ENCODE measurements at regions of chr18 and their contacts with region 1.

Region 1: DNA sequence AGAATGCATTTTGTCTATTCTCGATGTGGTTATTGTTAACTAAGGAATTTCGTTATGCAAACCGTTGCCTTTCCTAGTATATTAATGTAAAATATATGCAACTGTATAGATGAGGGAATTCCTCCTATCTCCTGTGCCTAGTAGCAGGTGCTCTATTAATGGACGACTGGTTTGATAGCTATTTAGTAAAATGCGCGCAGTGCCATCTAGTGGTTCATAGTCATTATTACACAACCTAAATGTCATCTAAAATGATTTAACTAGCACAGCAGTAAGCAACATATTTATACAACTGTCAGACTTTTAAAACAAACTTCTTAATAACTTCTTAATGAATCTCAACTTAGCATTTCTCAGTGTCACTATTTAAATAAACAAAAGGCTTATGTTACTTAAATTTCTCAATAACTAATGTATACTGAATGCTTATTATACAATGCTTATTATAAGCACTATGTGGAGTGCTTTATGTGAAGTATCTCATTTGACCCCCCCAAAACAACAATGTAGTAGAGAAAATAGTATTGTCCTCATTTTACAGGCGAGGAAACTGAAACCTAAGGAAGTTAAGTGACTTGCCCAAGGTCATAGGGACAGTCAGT is 77.9 kb downstream of the DTNA start:
- DNase-seq: no peak
- ATAC-seq: peak; percentile 76

Region 2: DNA sequence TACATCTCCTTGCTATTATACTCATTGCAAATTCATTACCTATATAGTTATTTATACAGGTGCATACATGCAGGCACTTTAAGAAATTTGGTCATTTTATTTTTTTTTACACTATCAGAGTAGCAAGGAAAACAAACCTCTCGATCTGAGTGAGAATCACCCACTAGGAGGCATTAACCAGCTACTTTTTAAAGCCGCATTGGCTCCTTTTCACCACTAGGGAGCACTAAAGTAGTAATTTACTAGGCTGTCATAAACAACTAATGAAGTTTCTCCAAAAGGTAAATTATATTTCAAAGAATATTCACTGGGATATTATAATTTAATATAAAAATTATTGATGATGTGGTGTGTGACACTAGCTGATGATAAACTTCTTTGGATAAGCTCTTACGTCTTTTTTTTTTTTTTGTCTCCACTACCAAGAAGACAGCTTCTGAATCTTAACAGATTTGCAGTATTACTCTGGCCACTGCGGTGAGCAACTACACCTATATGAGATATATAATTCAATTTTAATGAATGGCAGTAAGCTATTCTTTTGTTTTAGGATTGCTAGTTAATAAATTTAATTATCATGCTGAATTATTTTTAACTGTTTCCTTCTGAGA is 665.2 kb before region 1 on chr18:
- intact Hi-C with region 1: loop called (anchors 10 kb)
- DNase-seq: no peak
- ATAC-seq: peak; percentile 36

Region 3: DNA sequence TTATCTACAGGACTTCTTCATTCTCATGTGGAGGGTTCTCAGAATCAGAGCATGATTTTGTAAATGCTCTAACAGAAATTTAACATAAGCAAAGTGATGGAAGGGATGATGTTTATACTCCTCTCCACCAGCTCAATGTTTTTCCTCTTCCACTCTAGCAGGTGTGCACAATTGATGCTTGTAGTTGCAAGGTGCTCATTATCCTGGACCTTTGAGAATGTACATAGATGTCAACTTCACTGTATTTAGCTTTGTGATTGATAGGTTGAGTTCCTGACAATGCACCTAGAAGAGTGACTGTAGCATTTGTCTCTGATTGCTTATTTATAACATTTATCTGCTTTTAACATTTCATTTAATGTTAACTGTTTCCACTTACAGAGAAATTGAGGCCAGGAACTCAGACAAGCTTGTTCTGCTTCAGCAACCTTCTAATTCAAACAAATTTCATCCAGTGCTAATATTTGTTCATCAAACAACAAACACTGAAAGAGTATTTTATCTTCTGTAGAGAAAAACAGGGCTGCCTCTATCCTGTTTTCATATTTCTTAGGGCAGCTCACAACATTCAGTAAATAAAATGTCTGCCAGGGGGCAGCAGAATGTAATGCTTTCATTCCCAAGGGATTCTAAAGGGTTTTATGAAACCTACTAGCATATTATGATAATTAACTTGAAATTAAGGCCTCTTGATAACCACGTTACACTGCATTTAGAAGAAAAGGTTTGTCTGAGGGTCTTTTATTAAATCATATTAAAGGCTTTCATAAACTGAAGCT is 435.5 kb before region 1 on chr18:
- intact Hi-C with region 1: loop called (anchors 10 kb)
- DNase-seq: no peak
- ATAC-seq: no peak

Region 4: GRCh38 chr18:34483198-34483597 is 304.8 kb before region 1 on chr18:
- intact Hi-C with region 1: loop called (anchors 10 kb)
- DNase-seq: no peak
- ATAC-seq: no peak

Region 5: GRCh38 chr18:34707670-34708069 is 80.4 kb before region 1 on chr18:
- intact Hi-C with region 1: loop called (anchors 10 kb)
- DNase-seq: no peak
- ATAC-seq: peak; percentile 63

Measured in left ventricle myocardium superior (tissue), 1 donor.